Esophagus squamous epithelium (tissue), 5 donors: ENCODE measurements at regions of chr12 and their contacts with region 1.

Region 1: GRCh38 chr12:75505706-75506312 is 5.6 kb downstream of the KRR1 start:
- DNase-seq: no peak
- H3K4me3 ChIP-seq: no peak overlapping the region
- H3K27ac ChIP-seq: no peak overlapping the region
- H3K4me1 ChIP-seq: peaks cover 11 to 28% (median 22%) of the 10 kb centered on the region in 3 donors
- H3K27me3 ChIP-seq: no peaks in the 10 kb centered on the region
- CTCF ChIP-seq: peak in 5 of 6 experiments; percentile 28 to 61 (median 48)
- POLR2A ChIP-seq: no peak

Region 2: GRCh38 chr12:75334384-75335030 is 171.3 kb before region 1 on chr12 and contains the start of gene GLIPR1L1:
- intact Hi-C with region 1: loop called (anchors 5 kb)
- DNase-seq: peak; percentile 25
- H3K4me3 ChIP-seq: peak within 1 kb of the TSS; percentile 14 to 63 (median 40)
- H3K27ac ChIP-seq: peak within 1 kb of the TSS in 2 of 4 donors; percentile 7 to 38
- H3K4me1 ChIP-seq: peaks cover 0 to 21% (median 5%) of the 10 kb centered on the region in 3 donors
- H3K27me3 ChIP-seq: no peaks in the 10 kb centered on the region
- CTCF ChIP-seq: peak; percentile 74 to 95 (median 88)
- POLR2A ChIP-seq: no peak
- total RNA-seq, gene GLIPR1L1: not detected

Region 3: GRCh38 chr12:75825686-75826085 is 319.9 kb after region 1 on chr12:
- intact Hi-C with region 1: no loop called
- DNase-seq: no peak
- H3K4me3 ChIP-seq: no peak overlapping the region
- H3K27ac ChIP-seq: peak overlapping the region in 1 of 4 donors; percentile 11
- H3K4me1 ChIP-seq: peaks cover 7 to 30% (median 7%) of the 10 kb centered on the region in 3 donors
- H3K27me3 ChIP-seq: no peaks in the 10 kb centered on the region
- CTCF ChIP-seq: no peak
- POLR2A ChIP-seq: no peak